Naive thymus-derived CD4-positive, alpha-beta T cell (primary cell): ENCODE measurements at regions of chr7 and their contacts with region 1.

Region 1: DNA sequence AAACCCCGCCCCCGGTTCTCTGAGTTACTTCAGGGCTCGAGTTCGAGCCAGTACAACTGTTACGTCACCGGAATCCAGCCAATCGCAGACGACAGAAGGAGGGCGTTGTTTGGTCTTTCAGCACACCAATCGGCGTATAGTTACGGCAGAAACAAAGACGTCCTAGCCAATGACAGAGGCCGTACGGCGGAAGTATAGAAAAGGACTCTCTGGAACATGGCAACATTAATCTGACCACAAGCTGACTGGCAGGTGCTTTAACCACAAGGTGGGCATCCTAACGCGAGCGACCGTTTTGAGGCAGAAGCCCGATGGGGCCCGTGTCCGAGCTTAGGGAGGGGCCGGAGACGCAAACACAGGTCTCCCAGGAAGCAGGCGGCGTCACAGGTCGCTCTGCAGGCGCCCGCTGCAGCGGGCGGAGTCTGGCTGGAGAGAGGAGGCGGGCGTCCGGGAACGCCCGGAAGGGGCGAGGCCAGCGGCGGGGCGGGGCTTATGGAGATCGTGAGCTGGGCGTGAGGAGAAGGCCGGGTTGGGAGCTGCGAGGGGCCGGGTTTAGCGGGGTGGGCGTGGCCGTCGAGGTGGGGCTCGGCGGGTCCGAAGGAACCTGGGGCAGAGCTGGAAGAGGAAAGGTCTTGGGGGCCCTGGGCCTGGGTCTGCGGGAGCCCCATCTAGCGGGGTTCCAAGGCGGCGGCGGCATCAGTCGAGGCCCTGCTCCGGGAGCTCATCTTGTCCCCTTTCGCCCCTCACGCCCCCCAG is at the start of gene MOSPD3:
- DNase-seq: peak; percentile 97 to 99 (median 98)
- ATAC-seq: peak; percentile 94
- H3K4me3 ChIP-seq: peak within 1 kb of the TSS; percentile 99
- H3K4me3 Mint-ChIP-seq: peak within 1 kb of the TSS; percentile 92 to 99 (median 98)
- H3K27ac ChIP-seq: peak within 1 kb of the TSS; percentile 92
- H3K27ac Mint-ChIP-seq: peak within 1 kb of the TSS; percentile 97 to 100 (median 100)
- H3K4me1 ChIP-seq: peaks cover 10 to 16% of the 10 kb centered on the region in 2 donors
- H3K4me1 Mint-ChIP-seq: peaks cover 18 to 29% (median 24%) of the 10 kb centered on the region in 7 donors
- H3K27me3 ChIP-seq: no peaks in the 10 kb centered on the region
- H3K27me3 Mint-ChIP-seq: peaks cover 0 to 8% (median 0%) of the 10 kb centered on the region in 5 donors
- total RNA-seq, gene MOSPD3: 8.8 to 54.9 (median 13.1) TPM

Region 2: DNA sequence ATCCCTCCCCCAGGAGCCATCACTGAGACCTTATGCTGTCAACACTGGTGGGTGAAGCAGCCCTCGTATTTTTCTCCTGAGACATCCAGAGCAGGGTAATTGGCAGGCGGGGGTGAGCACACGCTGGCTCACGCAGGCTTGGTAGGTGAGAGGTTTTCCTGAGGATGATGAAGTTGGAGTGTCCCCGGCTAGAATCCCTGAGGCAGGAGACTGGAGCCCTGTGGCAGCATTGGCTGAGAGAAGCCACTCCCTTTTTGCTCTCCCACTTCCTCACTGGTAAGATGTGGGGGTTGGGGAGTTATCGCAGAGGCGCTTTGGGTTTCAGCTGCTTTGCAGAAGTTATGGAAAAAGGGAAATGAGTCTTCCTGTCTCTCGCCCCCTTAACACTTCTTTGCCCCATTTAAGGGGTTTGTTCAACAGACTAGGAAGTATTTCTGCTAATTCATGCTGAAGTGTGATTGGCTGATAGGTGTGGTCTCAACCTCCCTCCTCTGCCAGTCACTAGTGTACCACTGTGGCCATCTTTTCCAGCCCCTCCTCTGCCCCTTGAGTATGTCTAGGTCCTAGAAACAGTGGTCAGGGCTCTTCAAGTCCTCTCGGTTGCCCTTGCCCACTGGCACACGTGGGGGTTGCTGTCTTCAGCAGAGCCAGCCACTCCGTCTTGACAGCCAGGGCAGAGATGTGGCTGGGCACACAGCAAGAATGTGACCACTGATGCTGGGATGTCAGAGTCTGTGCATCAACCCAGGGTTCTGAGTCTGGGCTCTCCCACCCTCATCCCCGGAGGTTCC is 1231.9 kb before region 1 on chr7:
- CTCF ChIA-PET with region 1: no interaction called
- POLR2A ChIA-PET with region 1: interaction called, 6 read pairs
- intact Hi-C with region 1: loop called in 1 of 2 experiments (anchors 2 kb)
- DNase-seq: peak in 7 of 9 donors; percentile 21 to 37 (median 30)
- ATAC-seq: peak; percentile 15
- H3K4me3 ChIP-seq: peak overlapping the region; percentile 78
- H3K4me3 Mint-ChIP-seq: peak overlapping the region; percentile 78 to 91 (median 84)
- H3K27ac ChIP-seq: peak overlapping the region; percentile 96
- H3K27ac Mint-ChIP-seq: peak overlapping the region; percentile 87 to 99 (median 98)
- H3K4me1 ChIP-seq: peaks cover 44 to 68% of the 10 kb centered on the region in 2 donors
- H3K4me1 Mint-ChIP-seq: peaks cover 29 to 70% (median 60%) of the 10 kb centered on the region in 7 donors
- H3K27me3 ChIP-seq: no peaks in the 10 kb centered on the region
- H3K27me3 Mint-ChIP-seq: no peaks in the 10 kb centered on the region

Region 3: GRCh38 chr7:100538654-100539435 is 73.3 kb before region 1 on chr7 and contains the start of gene AGFG2:
- CTCF ChIA-PET with region 1: no interaction called
- POLR2A ChIA-PET with region 1: no interaction called
- intact Hi-C with region 1: loop called (anchors 1 kb)
- DNase-seq: peak; percentile 98 to 100 (median 100)
- ATAC-seq: peak; percentile 99
- H3K4me3 ChIP-seq: peak within 1 kb of the TSS; percentile 73
- H3K4me3 Mint-ChIP-seq: peak within 1 kb of the TSS; percentile 85 to 100 (median 96)
- H3K27ac ChIP-seq: peak within 1 kb of the TSS; percentile 64
- H3K27ac Mint-ChIP-seq: peak within 1 kb of the TSS; percentile 82 to 97 (median 90)
- H3K4me1 ChIP-seq: peaks cover 30 to 39% of the 10 kb centered on the region in 2 donors
- H3K4me1 Mint-ChIP-seq: peaks cover 26 to 53% (median 48%) of the 10 kb centered on the region in 7 donors
- H3K27me3 ChIP-seq: no peaks in the 10 kb centered on the region
- H3K27me3 Mint-ChIP-seq: peaks cover 0 to 2% (median 0%) of the 10 kb centered on the region in 5 donors
- total RNA-seq, gene AGFG2: 15.8 to 42.4 (median 23.3) TPM

Region 4: DNA sequence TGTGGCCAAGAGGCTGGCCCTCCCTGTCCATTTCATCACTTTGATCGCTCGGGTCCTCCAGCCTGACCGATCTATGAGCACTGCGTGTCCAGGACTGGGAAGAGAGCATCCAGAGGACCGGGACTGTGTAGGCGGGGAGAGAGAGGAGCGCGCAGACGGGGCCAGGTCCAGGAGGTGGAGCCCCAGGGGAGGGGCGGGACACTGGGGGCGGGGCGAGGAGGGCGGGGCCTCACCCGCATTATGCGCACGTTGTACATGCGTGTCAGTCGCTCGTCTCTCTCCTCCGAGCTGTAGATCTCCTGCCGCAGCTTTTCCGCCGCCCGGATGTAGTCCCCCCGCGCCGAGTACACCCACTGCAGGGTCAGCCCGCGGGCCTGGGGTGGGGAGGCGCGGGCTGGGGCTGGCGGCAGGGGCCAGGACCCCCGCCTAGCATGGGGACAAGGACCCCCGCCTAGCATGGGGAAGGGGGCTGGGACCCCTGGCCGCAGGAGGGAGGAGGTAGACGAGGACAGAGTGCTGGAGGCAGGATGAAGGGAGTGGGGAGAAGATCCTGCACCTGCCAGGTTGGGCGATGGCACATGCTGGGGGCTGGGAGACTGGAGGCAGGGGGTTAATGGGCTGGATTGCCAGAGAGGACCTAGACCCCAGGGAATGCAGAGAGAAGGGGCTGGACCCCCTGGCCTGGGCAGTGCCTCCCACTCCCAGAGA is 14.5 kb after region 1 on chr7:
- CTCF ChIA-PET with region 1: interaction called, 7 read pairs
- POLR2A ChIA-PET with region 1: interaction called, 55 read pairs
- intact Hi-C with region 1: loop called (anchors 1 kb)
- DNase-seq: peak; percentile 56 to 88 (median 81)
- ATAC-seq: peak; percentile 99
- H3K4me3 ChIP-seq: peak overlapping the region; percentile 58
- H3K4me3 Mint-ChIP-seq: peak overlapping the region; percentile 60 to 87 (median 76)
- H3K27ac ChIP-seq: peak overlapping the region; percentile 84
- H3K27ac Mint-ChIP-seq: peak overlapping the region; percentile 49 to 88 (median 75)
- H3K4me1 ChIP-seq: peaks cover 14 to 18% of the 10 kb centered on the region in 2 donors
- H3K4me1 Mint-ChIP-seq: peaks cover 26 to 58% (median 43%) of the 10 kb centered on the region in 7 donors
- H3K27me3 ChIP-seq: peaks cover 0 to 4% of the 10 kb centered on the region in 2 donors
- H3K27me3 Mint-ChIP-seq: no peaks in the 10 kb centered on the region

Region 5: GRCh38 chr7:100691676-100692577 is 79.8 kb after region 1 on chr7:
- CTCF ChIA-PET with region 1: interaction called, 17 read pairs
- POLR2A ChIA-PET with region 1: interaction called, 20 read pairs
- intact Hi-C with region 1: loop called (anchors 1 kb)
- DNase-seq: peak; percentile 64 to 85 (median 78)
- ATAC-seq: peak; percentile 79
- H3K4me3 ChIP-seq: peak overlapping the region; percentile 67
- H3K4me3 Mint-ChIP-seq: peak overlapping the region; percentile 92 to 100 (median 94)
- H3K27ac ChIP-seq: peak overlapping the region; percentile 73
- H3K27ac Mint-ChIP-seq: peak overlapping the region; percentile 62 to 96 (median 95)
- H3K4me1 ChIP-seq: peaks cover 23 to 27% of the 10 kb centered on the region in 2 donors
- H3K4me1 Mint-ChIP-seq: peaks cover 29 to 54% (median 41%) of the 10 kb centered on the region in 7 donors
- H3K27me3 ChIP-seq: no peaks in the 10 kb centered on the region
- H3K27me3 Mint-ChIP-seq: peaks cover 0 to 16% (median 0%) of the 10 kb centered on the region in 5 donors